ENCODE measurements at regions of chr3 and their contacts with region 1.

Region 1: GRCh38 chr3:197749601-197750395 is at the start of gene FYTTD1:
- DNase-seq: peak; percentile 81 to 98 (median 95)

Region 2: GRCh38 chr3:197736491-197737318 is 13.1 kb before region 1 on chr3 and contains the start of gene RUBCN:
- intact Hi-C with region 1: loop called (anchors 1 kb)
- DNase-seq: peak; percentile 92 to 98 (median 97)

Region 3: GRCh38 chr3:197791113-197791891 is 41.5 kb after region 1 on chr3 and contains the start of gene LRCH3:
- intact Hi-C with region 1: loop called (anchors 5 kb)
- DNase-seq: peak; percentile 48 to 93 (median 84)

Measured in head of caudate nucleus (tissue), 42 donors.